ENCODE measurements at regions of chr9 and their contacts with region 1.

Region 1: DNA sequence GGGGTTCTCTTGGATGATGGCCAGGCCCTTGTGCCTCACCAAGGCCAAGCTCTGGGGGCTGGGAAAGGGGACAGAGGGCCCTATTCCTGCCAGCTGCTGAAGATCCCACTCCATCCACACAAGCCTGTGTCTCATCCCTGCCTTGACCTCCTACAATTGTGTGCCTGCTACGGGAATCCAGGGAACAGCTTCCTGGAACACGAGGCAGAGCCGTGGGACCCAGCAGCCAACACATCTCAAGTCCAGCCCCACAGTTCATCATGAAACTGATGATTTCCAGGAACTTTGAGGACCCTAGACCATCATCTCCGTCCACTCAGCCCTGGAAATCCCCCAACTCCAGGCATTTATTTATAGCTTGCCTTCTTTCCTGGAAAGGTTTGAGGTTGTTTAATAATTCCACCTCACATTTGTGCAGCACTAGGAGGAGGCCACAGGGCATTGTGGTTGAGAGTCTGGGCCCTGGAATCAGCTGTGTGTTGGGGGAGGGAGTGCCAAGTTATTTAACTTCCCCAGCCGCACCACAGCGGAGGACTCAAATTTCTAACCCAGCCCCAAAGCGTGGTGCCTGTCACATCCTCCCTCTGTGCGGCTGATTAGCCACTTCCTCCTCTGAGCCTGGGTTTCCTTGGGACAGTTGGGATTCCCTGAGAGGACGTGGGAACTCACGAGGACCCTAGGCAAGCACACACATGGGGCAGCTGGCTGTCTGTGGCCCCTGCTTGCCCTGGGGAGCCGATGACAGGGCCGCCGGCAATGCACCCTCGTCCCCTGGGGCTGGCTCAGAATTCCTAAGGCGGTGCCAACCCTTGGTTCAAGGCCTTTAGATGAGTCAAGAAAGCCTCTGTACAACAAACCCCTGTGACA is 58.2 kb upstream of the GGTA1 start:
- DNase-seq: peak; percentile 71
- H3K4me3 ChIP-seq: 0 out of 2 replicates have a peak overlapping the region, but pooled peaks have one; percentile 13
- H3K27ac ChIP-seq: peak overlapping the region; percentile 85
- H3K27me3 ChIP-seq: peaks cover 9% of the 10 kb centered on the region
- CTCF ChIP-seq: no peak

Region 2: DNA sequence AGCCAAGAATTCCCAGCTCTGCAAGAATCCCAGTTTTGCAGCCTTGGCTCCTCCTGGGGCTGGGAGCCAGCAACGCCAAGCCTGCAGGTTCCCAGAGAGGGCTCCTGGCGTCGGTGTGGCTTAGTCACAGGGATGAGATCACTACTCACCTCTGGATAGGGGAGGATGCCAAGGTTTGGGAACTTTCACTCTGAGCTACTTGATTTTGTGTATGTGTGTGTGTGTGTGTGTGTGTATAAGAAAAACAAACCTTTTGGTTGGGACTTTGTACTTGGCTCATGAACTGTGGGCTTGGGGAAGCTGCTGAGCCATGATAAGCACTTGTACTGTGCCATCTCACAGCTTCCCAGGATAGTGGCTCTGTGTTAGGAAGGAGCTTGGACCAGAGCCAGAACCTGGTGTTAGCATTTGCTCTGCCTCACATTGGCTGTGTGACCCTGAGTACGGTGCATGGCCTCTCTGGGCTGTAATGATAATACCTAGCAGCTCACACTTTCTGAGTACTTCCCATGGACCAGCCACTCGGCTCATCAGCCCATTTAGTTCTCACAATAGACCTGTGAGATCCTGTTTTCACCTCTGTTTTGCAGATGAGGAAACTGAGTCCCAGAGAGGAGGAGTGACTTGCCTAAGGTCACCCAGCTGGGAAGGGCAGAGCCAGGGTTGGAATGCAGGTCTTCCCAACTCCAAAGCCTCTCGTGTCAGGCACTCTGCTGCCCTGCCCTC is 52.2 kb after region 1 on chr9:
- CTCF ChIA-PET with region 1: interaction called, 3 read pairs
- POLR2A ChIA-PET with region 1: interaction called, 10 read pairs
- DNase-seq: peak; percentile 55
- H3K4me3 ChIP-seq: no peak overlapping the region
- H3K27ac ChIP-seq: no peak overlapping the region
- H3K27me3 ChIP-seq: no peaks in the 10 kb centered on the region
- CTCF ChIP-seq: no peak